PC-3 (cell line): ENCODE measurements at regions of chr3 and their contacts with region 1.

Region 1: DNA sequence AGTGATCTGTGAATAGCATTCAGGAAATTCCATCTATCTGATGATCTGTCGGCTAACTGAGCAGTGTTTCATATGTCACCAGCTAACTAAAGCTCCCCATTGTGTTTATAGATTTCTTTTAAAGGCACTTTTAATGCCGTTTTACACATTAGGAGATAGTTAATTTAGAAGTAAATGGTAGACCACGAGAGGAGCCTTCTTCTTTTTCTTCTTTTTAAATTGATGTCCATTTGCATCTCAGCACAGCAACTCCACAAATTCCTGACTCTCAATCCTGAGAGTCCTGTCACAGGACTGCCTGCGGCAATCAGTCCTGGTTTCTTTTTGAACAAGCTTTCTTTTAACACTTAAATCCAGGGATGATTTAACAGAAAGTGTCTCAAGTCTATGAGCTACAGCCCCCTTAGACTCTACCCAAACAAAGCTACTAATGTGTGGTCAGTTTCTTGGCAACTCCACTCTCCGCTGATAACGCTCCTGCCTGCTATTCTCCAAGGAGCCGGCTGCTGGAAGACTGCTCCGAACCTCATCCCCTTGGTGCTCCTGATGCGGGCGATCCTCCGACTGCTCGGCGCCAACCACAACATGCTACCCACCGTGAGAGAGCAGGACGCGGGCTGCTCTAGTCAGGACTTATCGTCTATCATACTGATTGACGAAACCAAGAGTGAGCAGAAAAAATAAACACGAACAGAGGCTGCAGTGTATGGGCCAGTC is 421.4 kb downstream of the MECOM start:
- DNase-seq: no peak
- ATAC-seq: no peak
- H3K4me3 ChIP-seq: no peak overlapping the region
- H3K27ac ChIP-seq: no peak overlapping the region
- H3K4me1 ChIP-seq: no peaks in the 10 kb centered on the region
- H3K27me3 ChIP-seq: no peaks in the 10 kb centered on the region
- CTCF ChIP-seq: no peak

Region 2: GRCh38 chr3:169203631-169204550 is 38.3 kb before region 1 on chr3:
- CTCF ChIA-PET with region 1: no interaction called
- POLR2A ChIA-PET with region 1: no interaction called
- intact Hi-C with region 1: no loop called
- DNase-seq: no peak
- ATAC-seq: no peak
- H3K4me3 ChIP-seq: no peak overlapping the region
- H3K27ac ChIP-seq: no peak overlapping the region
- H3K4me1 ChIP-seq: peaks cover 8% of the 10 kb centered on the region
- H3K27me3 ChIP-seq: no peaks in the 10 kb centered on the region
- CTCF ChIP-seq: no peak

Region 3: GRCh38 chr3:169283951-169284350 is 41.8 kb after region 1 on chr3:
- CTCF ChIA-PET with region 1: no interaction called
- POLR2A ChIA-PET with region 1: no interaction called
- intact Hi-C with region 1: loop called (anchors 5 kb)
- DNase-seq: no peak
- ATAC-seq: no peak
- H3K4me3 ChIP-seq: no peak overlapping the region
- H3K27ac ChIP-seq: no peak overlapping the region
- H3K4me1 ChIP-seq: peaks cover 35% of the 10 kb centered on the region
- H3K27me3 ChIP-seq: no peaks in the 10 kb centered on the region
- CTCF ChIP-seq: no peak

Region 4: DNA sequence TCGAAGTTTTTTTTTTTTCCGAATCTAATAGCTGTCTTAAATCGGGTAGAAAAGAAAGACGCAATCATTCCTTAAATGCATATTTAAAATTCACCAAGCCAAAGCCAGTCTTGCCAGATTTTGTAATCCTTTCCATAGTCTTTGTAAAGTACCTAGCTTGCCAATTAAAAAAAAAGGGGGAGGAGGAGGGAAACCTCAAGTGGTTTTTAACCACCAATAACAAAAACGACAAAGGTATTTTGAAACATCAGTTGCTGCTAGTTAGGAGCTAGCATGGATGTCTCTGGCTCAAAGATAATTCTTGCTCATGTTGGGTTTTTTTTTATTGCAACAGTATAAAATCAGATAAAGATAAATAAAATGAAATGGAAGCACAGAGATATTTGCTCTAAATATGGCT is 233.4 kb after region 1 on chr3:
- CTCF ChIA-PET with region 1: no interaction called
- POLR2A ChIA-PET with region 1: no interaction called
- intact Hi-C with region 1: no loop called
- DNase-seq: no peak
- ATAC-seq: no peak
- H3K4me3 ChIP-seq: no peak overlapping the region
- H3K27ac ChIP-seq: no peak overlapping the region
- H3K4me1 ChIP-seq: no peaks in the 10 kb centered on the region
- H3K27me3 ChIP-seq: no peaks in the 10 kb centered on the region
- CTCF ChIP-seq: no peak